Dorsolateral prefrontal cortex (tissue), 120 donors: ENCODE measurements at regions of chr1 and their contacts with region 1.

Region 1: DNA sequence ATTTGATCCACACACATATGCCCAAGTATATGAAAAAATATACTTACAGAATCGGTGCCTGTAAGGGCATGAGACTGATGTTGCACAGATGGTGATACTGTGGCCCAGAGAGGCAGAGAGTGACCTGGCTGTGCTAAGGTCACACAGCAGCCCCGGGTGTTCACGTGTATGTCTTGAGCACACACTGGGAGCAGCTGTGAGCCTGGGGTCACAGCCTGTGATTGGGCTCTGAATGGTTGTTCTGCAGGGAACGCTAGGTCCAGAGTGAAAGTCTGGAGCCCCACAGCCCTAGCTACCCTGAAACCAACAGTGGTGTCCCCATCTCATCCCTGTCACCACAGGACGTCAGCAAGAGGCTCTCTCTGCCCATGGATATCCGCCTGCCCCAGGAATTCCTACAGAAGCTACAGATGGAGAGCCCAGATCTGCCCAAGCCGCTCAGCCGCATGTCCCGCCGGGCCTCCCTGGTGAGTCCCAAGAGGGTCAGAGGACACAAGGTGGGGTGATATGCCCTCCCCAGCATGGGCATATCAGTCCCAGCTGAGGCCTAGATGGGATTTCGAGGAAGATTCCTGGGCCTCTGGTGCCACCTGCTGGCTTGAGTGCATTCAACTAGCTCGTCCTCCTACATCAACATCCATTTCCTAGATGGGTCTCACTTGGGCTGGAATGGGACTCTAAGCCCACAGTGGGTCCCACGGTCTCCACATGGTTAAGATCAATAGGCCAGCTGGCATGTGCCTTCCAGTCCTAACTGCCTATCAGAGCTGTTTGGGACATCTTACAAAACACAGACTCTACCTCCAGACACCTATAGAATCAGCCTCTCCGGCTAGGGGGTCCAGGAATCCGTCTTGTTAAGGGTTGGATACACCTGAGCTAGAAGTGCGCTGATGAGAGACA is 19.7 kb downstream of the CDK18 start:
- DNase-seq: peak; percentile 83 to 94 (median 90)
- H3K4me3 ChIP-seq: no peak overlapping the region
- H3K27ac ChIP-seq: peak overlapping the region in 58 of 59 donors; percentile 8 to 100 (median 95)
- H3K27me3 ChIP-seq: no peaks in the 10 kb centered on the region
- CTCF ChIP-seq: peak; percentile 73 to 98 (median 91)

Region 2: DNA sequence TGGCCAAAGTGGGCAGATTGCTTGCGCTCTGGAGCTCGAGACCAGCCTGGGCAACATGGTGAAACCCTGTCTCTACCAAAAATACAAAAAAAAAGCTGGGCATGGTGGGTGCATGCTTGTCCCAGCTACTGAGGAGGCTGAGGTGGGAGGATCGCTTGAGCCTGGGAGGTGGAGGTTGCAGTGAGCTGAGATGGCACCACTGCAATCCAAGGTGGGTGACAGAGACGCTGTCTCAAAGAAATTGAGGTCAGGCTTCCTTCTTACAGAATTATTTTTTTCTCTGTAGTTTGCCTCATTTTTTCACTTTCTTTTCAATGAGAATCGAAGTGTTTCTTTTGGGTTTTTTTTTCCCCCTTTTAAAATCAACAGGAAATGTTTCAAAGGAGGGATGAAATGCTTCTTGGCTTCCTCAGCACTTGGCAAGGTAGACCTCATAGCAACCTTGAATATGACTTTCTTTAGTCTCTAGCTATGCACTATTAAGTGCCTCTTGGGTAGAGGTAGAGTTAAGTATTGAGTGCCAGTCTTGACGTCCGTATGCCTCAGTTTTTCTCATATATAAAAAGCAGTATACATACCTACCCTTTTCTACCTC is 967.6 kb before region 1 on chr1:
- intact Hi-C with region 1: no loop called
- DNase-seq: no peak
- H3K4me3 ChIP-seq: no peak overlapping the region
- H3K27ac ChIP-seq: no peak overlapping the region
- H3K27me3 ChIP-seq: no peaks in the 10 kb centered on the region
- CTCF ChIP-seq: no peak

Region 3: DNA sequence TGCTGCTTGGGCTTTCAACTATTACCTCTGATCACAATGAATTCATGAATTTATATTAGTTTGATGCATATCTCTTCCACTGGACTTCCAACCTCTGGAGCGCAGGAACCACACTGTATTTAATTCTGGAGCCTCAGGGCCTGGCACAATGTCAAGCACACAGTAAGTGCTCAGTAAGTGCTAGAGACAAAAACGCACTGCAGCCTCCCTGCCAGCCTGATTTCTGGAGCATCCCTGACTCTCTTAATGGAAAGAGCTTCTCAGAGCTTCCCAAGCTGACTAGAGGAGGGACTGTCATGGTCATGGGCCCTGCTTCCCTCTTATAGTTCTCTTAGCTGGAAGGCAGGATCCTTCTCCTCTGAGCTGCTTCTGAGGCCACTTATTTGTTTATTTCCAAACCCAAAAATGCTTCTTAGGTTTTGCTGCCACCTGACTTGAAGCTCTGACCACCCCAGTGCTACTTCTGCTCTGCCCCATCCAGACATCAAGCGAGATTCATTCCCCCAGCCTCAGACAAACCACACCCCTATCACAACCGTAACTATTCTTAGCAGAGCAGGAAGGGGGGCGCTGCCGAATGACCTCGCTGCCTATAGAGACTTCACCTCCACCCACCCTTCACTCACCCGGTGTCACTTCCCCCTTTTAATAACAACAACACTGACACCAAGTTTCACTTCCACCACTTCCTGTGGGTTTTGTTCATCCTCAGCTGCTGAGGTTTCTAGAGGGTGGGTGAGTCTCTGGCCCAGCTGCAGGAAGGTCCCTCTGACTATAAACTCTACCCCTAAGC is 236.2 kb before region 1 on chr1:
- intact Hi-C with region 1: no loop called
- DNase-seq: peak in 2 of 10 donors; percentile 29 to 48
- H3K4me3 ChIP-seq: no peak overlapping the region
- H3K27ac ChIP-seq: peak overlapping the region in 34 of 59 donors; percentile 1 to 94 (median 42)
- H3K27me3 ChIP-seq: no peaks in the 10 kb centered on the region
- CTCF ChIP-seq: no peak

Region 4: GRCh38 chr1:205396967-205397616 is 127.0 kb before region 1 on chr1:
- intact Hi-C with region 1: loop called (anchors 2 to 5 kb)
- DNase-seq: peak in 2 of 10 donors; percentile 40 to 71
- H3K4me3 ChIP-seq: no peak overlapping the region
- H3K27ac ChIP-seq: no peak overlapping the region
- H3K27me3 ChIP-seq: no peaks in the 10 kb centered on the region
- CTCF ChIP-seq: peak; percentile 51 to 81 (median 73)

Region 5: GRCh38 chr1:205496661-205497060 is 27.5 kb before region 1 on chr1:
- intact Hi-C with region 1: loop called in 1 of 2 experiments (anchors 1 kb)
- DNase-seq: no peak
- H3K4me3 ChIP-seq: no peak overlapping the region
- H3K27ac ChIP-seq: peak overlapping the region in 11 of 59 donors; percentile 12 to 84 (median 52)
- H3K27me3 ChIP-seq: no peaks in the 10 kb centered on the region
- CTCF ChIP-seq: no peak

Region 6: DNA sequence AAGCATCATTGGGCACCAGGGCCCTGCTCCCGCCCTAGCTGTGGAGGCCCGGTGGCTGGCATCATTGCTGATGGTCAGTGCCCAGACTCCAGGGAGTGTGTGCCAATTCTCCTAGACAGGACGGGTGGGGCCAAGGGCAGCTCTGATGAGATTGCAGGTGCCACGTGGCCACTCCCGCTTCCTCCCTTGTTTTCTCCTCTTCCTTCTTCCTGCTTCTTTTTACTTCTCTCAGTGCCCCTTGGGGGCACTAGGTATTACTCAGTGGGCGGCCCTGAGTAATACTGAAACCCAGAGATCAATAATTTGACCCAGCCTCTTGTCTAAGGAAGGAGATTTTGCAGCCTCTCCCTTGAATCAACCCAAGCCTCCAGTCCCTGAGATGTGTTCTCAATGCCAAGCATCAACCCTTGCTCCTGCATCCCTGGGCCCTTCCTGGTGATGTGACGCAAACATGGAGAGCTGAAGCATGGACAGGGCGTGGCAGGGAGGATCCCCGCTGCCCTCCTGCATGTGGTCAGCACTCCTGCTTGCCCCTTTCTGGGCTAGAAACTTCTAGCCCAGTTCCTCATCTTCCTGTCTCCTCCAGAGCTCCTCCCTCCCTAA is 12.7 kb after region 1 on chr1:
- intact Hi-C with region 1: no loop called
- DNase-seq: peak in 8 of 10 donors; percentile 63 to 94 (median 76)
- H3K4me3 ChIP-seq: no peak overlapping the region
- H3K27ac ChIP-seq: peak overlapping the region in 45 of 59 donors; percentile 1 to 80 (median 60)
- H3K27me3 ChIP-seq: no peaks in the 10 kb centered on the region
- CTCF ChIP-seq: no peak